Activated CD8-positive, alpha-beta T cell treated with anti-CD3 and anti-CD28 coated beads, Interleukin-2, amount 10 ng/mL, durations not matched to agents 7 days and 5 days (primary cell): ENCODE measurements at regions of chr11 and their contacts with region 1.

Region 1: GRCh38 chr11:62652161-62653006 is 718 bp downstream of the INTS5 start:
- DNase-seq: no peak
- ATAC-seq: peak; percentile 7
- H3K4me3 Mint-ChIP-seq: peak overlapping the region; percentile 87
- H3K27ac Mint-ChIP-seq: peak overlapping the region; percentile 91
- H3K4me1 Mint-ChIP-seq: peaks cover 26% of the 10 kb centered on the region
- H3K27me3 Mint-ChIP-seq: no peaks in the 10 kb centered on the region

Region 2: GRCh38 chr11:62671575-62672389 is 19.4 kb after region 1 on chr11 and contains the starts of genes LBHD1 and UQCC3:
- CTCF ChIA-PET with region 1: interaction called, 5 read pairs
- POLR2A ChIA-PET with region 1: interaction called, 76 read pairs
- DNase-seq: peak; percentile 81
- ATAC-seq: peak; percentile 85
- H3K4me3 Mint-ChIP-seq: peak within 1 kb of the TSS; percentile 99
- H3K27ac Mint-ChIP-seq: peak within 1 kb of the TSS; percentile 99
- H3K4me1 Mint-ChIP-seq: peaks cover 67% of the 10 kb centered on the region
- H3K27me3 Mint-ChIP-seq: no peaks in the 10 kb centered on the region
- total RNA-seq, gene LBHD1: 22.3 to 25.0 TPM
- total RNA-seq, gene UQCC3: 7.5 TPM